ENCODE measurements at regions of chr2 and their contacts with region 1.

Region 1: GRCh38 chr2:224650815-224651439 is 65.2 kb downstream of the CCDC195 start:
- ATAC-seq: peak; percentile 45 to 87 (median 60)
- H3K4me3 ChIP-seq: no peak overlapping the region
- H3K27ac ChIP-seq: no peak overlapping the region
- H3K4me1 ChIP-seq: no peaks in the 10 kb centered on the region

Region 2: GRCh38 chr2:223957092-223957851 is 693.7 kb before region 1 on chr2 and contains the start of gene MRPL44:
- in situ Hi-C with region 1: loop called in 1 of 9 experiments (anchors 25 kb)
- ATAC-seq: peak; percentile 97 to 100 (median 99)
- H3K4me3 ChIP-seq: peak within 1 kb of the TSS; percentile 86 to 99 (median 95)
- H3K27ac ChIP-seq: peak within 1 kb of the TSS; percentile 88 to 94
- H3K4me1 ChIP-seq: peaks cover 22 to 42% of the 10 kb centered on the region in 2 donors
- total RNA-seq, gene MRPL44: 35.4 to 46.7 (median 39.9) TPM

Region 3: DNA sequence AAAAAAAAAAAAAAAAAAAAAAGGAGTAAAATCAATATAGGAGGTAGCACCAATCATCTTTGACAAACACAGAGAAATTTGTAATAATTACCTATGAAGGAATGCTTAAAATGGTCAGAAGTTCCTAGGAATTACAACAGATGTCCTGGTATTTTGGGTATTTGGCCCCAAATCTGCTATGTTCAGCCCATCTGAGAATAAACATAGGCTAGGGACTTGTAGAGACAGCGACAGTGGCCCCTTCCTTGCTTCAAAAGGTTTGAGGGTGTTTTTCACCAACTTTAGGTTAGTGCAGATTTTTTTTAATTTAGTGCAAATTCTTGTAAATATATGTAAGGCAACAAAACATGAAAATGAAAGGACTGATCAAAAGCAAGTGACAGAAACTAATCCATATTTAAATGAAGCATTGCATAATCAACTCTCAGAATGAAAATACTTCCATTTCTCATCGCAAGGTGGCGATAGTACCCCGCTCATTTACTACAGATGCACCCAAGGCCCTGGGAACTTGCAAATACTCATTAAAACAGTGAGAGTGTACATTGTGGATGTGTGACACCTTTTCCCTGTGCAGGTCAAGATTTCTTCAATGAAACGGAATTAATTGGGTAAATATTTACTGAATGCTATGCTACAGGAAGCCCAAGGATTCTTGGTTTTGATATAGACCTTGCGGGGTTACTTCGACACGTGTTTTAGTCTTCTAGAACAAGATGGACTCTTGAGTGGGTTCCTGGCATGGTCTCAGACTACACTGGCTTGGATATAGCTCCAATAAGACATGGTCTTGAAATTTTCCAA is 293.6 kb before region 1 on chr2:
- in situ Hi-C with region 1: loop called in 5 of 9 experiments (anchors 10 to 25 kb)
- ATAC-seq: peak; percentile 43 to 92 (median 70)
- H3K4me3 ChIP-seq: no peak overlapping the region
- H3K27ac ChIP-seq: no peak overlapping the region
- H3K4me1 ChIP-seq: no peaks in the 10 kb centered on the region

Region 4: DNA sequence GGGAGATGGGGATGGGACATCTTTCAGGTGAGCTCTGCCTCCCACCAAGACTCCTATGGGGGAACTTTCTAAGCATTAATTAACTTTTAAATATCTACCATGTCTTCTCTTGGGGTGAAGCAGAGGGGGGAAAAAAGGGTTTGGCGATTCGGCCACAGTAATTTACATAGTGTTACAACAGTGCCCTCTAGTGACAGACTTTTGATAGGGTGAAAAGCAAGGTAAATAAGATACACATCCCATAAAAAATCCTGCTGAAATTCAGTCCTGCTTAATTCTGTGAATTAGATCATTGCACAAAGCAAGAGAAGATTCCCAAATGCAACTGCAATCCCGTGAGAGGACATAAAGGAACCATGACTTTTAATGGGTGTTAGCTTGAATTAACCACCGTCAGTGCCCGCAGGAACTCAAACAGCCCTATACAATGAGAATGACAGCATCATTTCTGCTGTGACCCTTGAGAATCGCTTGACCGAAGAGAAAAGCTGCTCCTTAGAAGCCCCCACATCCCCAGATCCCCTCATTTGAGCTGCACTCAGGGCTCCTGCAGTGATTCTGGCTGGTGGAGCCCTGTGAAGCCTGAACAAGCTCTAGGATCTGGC is 281.8 kb before region 1 on chr2:
- in situ Hi-C with region 1: loop called in 2 of 9 experiments (anchors 10 to 25 kb)
- ATAC-seq: peak in 1 of 8 experiments; percentile 20
- H3K4me3 ChIP-seq: no peak overlapping the region
- H3K27ac ChIP-seq: no peak overlapping the region
- H3K4me1 ChIP-seq: no peaks in the 10 kb centered on the region

Region 5: GRCh38 chr2:224520064-224520463 is 130.9 kb before region 1 on chr2:
- in situ Hi-C with region 1: loop called in 1 of 9 experiments (anchors 25 kb)
- ATAC-seq: peak in 3 of 8 experiments; percentile 48 to 81 (median 64)
- H3K4me3 ChIP-seq: no peak overlapping the region
- H3K27ac ChIP-seq: no peak overlapping the region
- H3K4me1 ChIP-seq: peaks cover 0 to 4% of the 10 kb centered on the region in 2 donors

Region 6: DNA sequence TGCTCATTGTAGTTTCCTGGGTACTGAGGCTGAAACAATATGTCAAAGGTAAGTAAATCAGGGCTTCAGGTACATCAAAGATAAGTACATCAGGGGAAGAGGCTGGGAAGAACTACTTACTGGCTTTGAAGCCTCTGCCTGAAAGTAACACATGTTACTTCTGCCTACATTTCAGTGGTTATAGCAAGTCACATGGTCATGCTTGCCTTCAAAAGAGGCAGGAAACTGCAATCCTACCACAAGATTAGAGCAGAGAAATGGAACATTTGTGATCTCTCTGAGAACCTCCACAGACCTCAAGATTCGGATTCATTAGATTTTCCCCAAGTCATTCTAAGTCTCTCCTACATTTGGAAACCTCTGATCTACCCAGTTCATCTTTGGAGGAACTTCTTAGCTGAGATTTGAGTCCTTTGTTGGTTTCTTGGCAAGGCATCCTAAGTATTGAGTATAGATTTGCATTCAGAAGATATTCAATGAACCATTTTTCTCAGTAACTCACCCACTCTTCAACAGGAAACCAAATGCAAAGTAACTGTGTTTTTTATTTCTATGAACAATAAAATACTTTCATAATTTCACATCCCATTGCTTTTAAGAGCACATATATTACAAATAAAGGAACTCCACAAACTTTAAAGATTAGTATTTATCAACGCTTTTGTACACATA is 113.8 kb after region 1 on chr2:
- in situ Hi-C with region 1: loop called in 1 of 9 experiments (anchors 25 kb)
- ATAC-seq: no peak
- H3K4me3 ChIP-seq: no peak overlapping the region
- H3K27ac ChIP-seq: no peak overlapping the region
- H3K4me1 ChIP-seq: no peaks in the 10 kb centered on the region

Region 7: DNA sequence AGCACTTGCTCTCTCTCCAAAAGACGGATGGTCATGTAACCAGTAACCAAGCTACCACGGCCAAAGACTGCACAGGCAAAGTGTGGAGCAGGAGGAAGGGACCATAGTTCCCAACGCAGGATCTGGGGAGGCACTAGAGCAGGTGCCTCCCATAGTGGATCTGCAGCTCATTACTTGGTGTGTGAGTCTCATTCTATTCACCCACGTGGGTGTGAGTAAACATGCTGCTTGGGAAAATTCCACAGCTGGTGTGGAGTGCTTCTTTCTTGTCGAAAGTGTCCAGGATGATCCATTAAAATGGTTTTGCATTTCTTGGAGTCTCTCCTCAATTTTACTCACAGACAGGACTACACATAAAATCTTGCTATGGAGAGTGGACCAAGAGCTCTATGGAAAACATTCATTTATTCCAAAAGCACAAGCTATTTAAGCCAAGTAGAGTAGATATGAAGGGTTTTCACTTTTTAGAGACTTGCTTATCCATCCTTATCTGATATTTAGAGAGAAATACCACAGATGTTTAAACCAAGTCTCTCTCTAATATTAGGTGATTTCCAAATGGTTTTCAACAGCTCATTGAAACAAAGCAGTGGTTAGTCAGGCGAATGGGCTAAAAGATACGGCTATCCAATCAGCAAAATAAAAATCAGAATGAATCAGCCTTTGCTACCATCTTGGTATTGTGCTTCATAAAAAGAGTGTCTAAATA is 169.5 kb after region 1 on chr2:
- in situ Hi-C with region 1: no loop called
- ATAC-seq: peak in 1 of 8 experiments; percentile 16
- H3K4me3 ChIP-seq: no peak overlapping the region
- H3K27ac ChIP-seq: no peak overlapping the region
- H3K4me1 ChIP-seq: peaks cover 0 to 11% of the 10 kb centered on the region in 2 donors

Region 8: GRCh38 chr2:225013425-225014365 is 362.8 kb after region 1 on chr2:
- in situ Hi-C with region 1: no loop called
- ATAC-seq: no peak
- H3K4me3 ChIP-seq: no peak overlapping the region
- H3K27ac ChIP-seq: no peak overlapping the region
- H3K4me1 ChIP-seq: peaks cover 0 to 4% of the 10 kb centered on the region in 2 donors

Measured in motor neuron (in vitro differentiated cells).